ENCODE measurements at regions of chr10 and their contacts with region 1.

Region 1: DNA sequence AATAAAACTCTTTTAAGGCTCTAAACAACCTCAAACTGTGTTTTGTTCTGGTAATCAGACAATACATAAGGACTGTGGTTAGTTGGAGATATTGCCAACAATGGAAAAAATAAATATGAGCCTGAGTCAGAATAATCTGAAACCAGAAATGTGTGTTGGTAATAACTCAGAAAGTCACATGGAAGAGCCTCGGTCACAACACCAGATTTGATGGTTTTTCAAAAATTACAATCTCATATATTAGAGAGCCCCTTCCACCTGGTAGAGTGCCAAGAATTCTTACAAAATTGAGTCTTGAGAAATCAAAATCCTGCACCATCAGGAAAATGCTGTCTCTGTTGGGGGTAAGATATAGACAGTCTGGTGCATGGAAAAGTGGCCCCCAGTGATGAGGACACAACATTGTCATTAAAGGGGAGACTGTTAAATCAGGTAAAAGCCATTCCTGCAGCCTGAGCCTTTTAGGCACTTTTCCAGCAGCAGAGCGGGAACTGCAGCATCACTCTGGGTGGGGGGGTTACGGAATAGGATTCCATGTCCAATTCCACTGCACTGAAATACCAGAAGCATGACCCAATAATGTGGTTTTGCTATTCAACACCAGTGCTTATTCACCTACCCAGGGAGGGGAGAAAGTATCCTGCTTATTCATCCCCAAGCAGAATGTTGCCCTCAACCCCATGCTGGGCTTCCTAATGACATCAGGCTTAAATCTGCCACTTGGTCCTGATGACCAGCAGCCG is 9.5 kb upstream of the ADAM12 start:
- DNase-seq: peak; percentile 98
- ATAC-seq: peak; percentile 97
- H3K4me3 ChIP-seq: no peak overlapping the region
- H3K27ac ChIP-seq: peak overlapping the region; percentile 10; the same call in 1 of the 2 replicates
- H3K4me1 ChIP-seq: peaks cover 7% of the 10 kb centered on the region
- H3K27me3 ChIP-seq: no peaks in the 10 kb centered on the region
- CTCF ChIP-seq: no peak
- POLR2A ChIP-seq: no peak
- RAD21 ChIP-seq: peak; percentile 25; the same call in 1 of the 2 replicates

Region 2: GRCh38 chr10:124511205-124512039 is 1886.4 kb before region 1 on chr10:
- CTCF ChIA-PET with region 1: no interaction called
- POLR2A ChIA-PET with region 1: no interaction called
- dilution Hi-C with region 1: no loop called
- in situ Hi-C with region 1: no loop called
- intact Hi-C with region 1: loop called (anchors 10 kb)
- DNase-seq: no peak
- ATAC-seq: no peak
- H3K4me3 ChIP-seq: no peak overlapping the region
- H3K27ac ChIP-seq: no peak overlapping the region
- H3K4me1 ChIP-seq: no peaks in the 10 kb centered on the region
- H3K27me3 ChIP-seq: peaks cover 2% of the 10 kb centered on the region; the same call in 1 of the 2 replicates
- CTCF ChIP-seq: no peak
- POLR2A ChIP-seq: no peak
- RAD21 ChIP-seq: no peak

Region 3: GRCh38 chr10:124928087-124928486 is 1469.7 kb before region 1 on chr10:
- CTCF ChIA-PET with region 1: no interaction called
- POLR2A ChIA-PET with region 1: no interaction called
- dilution Hi-C with region 1: no loop called
- in situ Hi-C with region 1: no loop called
- intact Hi-C with region 1: no loop called
- DNase-seq: no peak
- ATAC-seq: no peak
- H3K4me3 ChIP-seq: no peak overlapping the region
- H3K27ac ChIP-seq: no peak overlapping the region
- H3K4me1 ChIP-seq: peaks cover 4% of the 10 kb centered on the region; the same call in 1 of the 2 replicates
- H3K27me3 ChIP-seq: no peaks in the 10 kb centered on the region
- CTCF ChIP-seq: no peak
- POLR2A ChIP-seq: no peak
- RAD21 ChIP-seq: no peak

Region 4: DNA sequence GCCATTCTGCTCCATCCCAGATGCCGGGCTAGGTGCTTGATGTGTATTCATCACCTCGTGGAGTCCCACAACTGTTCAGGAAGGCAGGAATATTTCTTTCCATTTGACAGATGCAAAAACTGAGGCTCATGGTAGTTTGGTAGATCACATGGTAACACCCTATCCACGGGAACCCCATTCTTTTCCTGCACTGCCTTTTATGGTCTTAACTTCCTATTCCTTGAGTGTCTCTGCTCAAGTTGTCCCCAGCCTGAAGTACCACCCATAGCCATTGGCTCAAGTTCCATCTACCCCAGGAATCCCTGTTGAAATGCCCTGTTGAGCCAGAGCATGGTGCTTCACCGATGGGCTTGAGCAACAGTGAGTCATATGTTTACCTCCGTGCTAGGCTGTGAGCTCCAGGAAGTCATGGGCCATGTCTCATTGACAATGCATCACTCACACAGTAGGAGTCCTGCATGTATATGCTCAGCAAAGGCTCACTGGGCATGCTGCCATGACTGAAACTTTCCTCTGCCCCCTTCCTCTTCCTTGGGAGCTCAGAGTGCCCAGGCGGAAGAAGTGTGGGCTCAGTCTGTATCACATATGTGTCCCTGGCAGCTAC is 62.2 kb after region 1 on chr10:
- CTCF ChIA-PET with region 1: no interaction called
- POLR2A ChIA-PET with region 1: no interaction called
- dilution Hi-C with region 1: no loop called
- in situ Hi-C with region 1: no loop called
- intact Hi-C with region 1: loop called (anchors 5 kb)
- DNase-seq: peak; percentile 92
- ATAC-seq: peak; percentile 75
- H3K4me3 ChIP-seq: no peak overlapping the region
- H3K27ac ChIP-seq: no peak overlapping the region
- H3K4me1 ChIP-seq: peaks cover 1% of the 10 kb centered on the region; the same call in 1 of the 2 replicates
- H3K27me3 ChIP-seq: peaks cover 4% of the 10 kb centered on the region; the same call in 1 of the 2 replicates
- CTCF ChIP-seq: no peak
- POLR2A ChIP-seq: no peak
- RAD21 ChIP-seq: no peak

Region 5: GRCh38 chr10:126496771-126497545 is 99.1 kb after region 1 on chr10:
- CTCF ChIA-PET with region 1: no interaction called
- POLR2A ChIA-PET with region 1: no interaction called
- dilution Hi-C with region 1: no loop called
- in situ Hi-C with region 1: loop called (anchors 5 kb)
- intact Hi-C with region 1: no loop called
- DNase-seq: no peak
- ATAC-seq: no peak
- H3K4me3 ChIP-seq: no peak overlapping the region
- H3K27ac ChIP-seq: no peak overlapping the region
- H3K4me1 ChIP-seq: peaks cover 3% of the 10 kb centered on the region; the same call in 1 of the 2 replicates
- H3K27me3 ChIP-seq: no peaks in the 10 kb centered on the region; the same call in none of the 2 replicates
- CTCF ChIP-seq: no peak
- POLR2A ChIP-seq: no peak
- RAD21 ChIP-seq: no peak